ENCODE measurements at regions of chr7 and their contacts with region 1.

Region 1: GRCh38 chr7:44466300-44467216 is 23.9 kb downstream of the NUDCD3 start:
- DNase-seq: no peak

Region 2: GRCh38 chr7:43546231-43546630 is 920.3 kb before region 1 on chr7:
- CTCF ChIA-PET with region 1: no interaction called
- POLR2A ChIA-PET with region 1: no interaction called
- DNase-seq: no peak

Region 3: DNA sequence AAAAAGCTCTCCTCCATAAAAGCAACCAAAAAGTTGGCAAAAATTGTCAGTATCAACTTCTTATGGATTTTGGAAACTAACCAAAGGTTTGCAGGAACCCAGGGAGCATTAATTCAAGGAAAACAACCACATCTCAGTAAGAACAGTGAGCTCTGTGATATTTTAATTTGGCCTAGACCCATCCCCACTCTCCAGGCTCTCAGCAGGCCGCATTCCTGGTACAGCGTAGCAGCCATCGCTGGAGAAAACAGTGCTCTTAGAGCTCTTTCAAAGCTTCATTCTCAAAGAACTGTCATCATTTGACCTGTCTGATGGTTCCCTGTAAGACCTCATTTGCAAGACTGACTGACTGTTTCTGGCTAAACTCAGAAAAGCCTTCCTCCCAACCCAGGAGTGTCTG is 58.0 kb before region 1 on chr7:
- CTCF ChIA-PET with region 1: interaction called, 11 read pairs
- POLR2A ChIA-PET with region 1: no interaction called
- DNase-seq: no peak

Region 4: GRCh38 chr7:44581879-44582603 is 115.5 kb after region 1 on chr7 and contains the start of gene TMED4:
- CTCF ChIA-PET with region 1: no interaction called
- POLR2A ChIA-PET with region 1: no interaction called
- DNase-seq: peak; percentile 100

Region 5: GRCh38 chr7:44748045-44748947 is 281.7 kb after region 1 on chr7 and contains the start of gene ZMIZ2:
- CTCF ChIA-PET with region 1: no interaction called
- POLR2A ChIA-PET with region 1: no interaction called
- DNase-seq: peak; percentile 98

Region 6: DNA sequence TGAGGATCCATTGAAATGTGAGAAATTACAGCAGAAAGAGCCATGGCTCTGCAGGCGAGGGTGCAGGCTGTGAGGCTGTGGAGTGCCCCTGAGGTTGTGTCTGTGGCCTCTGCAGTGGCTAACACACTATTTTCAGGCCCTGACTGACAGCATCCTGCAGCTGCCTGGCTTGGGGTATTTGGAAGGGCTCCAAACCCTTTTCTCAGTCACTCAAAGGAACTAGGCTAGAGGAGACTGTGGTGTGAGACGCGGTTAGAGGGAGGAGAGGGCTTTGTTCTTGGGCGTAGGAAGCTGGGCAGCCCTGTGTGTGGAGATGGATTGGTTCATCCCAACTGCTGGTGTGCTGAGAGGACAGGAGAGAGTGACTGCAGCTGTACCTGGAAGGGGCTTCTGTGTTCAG is 825.9 kb after region 1 on chr7:
- CTCF ChIA-PET with region 1: no interaction called
- POLR2A ChIA-PET with region 1: no interaction called
- DNase-seq: no peak